WTC11 (cell line): ENCODE measurements at regions of chr15 and their contacts with region 1.

Region 1: GRCh38 chr15:45729141-45729540 is 94.3 kb downstream of the SQOR start:
- DNase-seq: no peak
- ATAC-seq: no peak
- H3K4me3 Mint-ChIP-seq: no peak overlapping the region
- H3K27ac Mint-ChIP-seq: no peak overlapping the region
- H3K4me1 Mint-ChIP-seq: peaks cover 15% of the 10 kb centered on the region
- H3K27me3 Mint-ChIP-seq: no peaks in the 10 kb centered on the region
- CTCF ChIP-seq: no peak

Region 2: DNA sequence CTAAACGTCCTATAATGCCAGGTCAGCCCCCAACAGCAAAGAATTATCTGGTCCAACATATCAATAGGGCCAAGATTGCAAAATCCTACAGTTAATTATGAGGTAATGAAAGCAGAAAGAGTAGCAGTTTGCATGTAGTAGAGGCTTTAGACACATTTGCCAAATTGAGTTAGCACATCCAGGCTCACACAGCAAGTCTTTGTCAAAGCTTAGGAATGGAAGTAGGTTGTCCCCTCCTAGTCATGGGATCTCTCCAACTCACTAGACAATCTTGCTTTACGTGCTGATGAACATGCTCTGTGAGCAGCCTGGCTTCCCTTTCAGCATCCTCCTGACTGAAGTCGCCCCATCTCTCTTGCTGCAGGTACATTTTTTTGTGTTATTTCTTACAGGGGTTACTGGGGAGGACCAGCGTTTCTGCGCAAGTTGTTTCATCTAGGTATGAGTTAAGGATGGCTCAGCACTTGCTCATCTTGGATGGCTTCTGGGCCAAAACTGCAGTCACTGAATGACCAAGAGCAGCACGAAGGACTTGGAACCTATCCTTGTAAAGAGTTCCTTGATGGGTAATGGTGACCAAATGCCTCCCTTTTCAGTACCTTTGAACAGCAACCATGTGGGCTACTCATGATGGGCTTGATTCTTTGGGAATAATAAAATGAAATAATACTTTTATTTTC is 38.4 kb before region 1 on chr15:
- CTCF ChIA-PET with region 1: no interaction called
- POLR2A ChIA-PET with region 1: no interaction called
- DNase-seq: no peak
- ATAC-seq: no peak
- H3K4me3 Mint-ChIP-seq: no peak overlapping the region
- H3K27ac Mint-ChIP-seq: no peak overlapping the region
- H3K4me1 Mint-ChIP-seq: no peaks in the 10 kb centered on the region
- H3K27me3 Mint-ChIP-seq: peaks cover 3% of the 10 kb centered on the region
- CTCF ChIP-seq: no peak

Region 3: DNA sequence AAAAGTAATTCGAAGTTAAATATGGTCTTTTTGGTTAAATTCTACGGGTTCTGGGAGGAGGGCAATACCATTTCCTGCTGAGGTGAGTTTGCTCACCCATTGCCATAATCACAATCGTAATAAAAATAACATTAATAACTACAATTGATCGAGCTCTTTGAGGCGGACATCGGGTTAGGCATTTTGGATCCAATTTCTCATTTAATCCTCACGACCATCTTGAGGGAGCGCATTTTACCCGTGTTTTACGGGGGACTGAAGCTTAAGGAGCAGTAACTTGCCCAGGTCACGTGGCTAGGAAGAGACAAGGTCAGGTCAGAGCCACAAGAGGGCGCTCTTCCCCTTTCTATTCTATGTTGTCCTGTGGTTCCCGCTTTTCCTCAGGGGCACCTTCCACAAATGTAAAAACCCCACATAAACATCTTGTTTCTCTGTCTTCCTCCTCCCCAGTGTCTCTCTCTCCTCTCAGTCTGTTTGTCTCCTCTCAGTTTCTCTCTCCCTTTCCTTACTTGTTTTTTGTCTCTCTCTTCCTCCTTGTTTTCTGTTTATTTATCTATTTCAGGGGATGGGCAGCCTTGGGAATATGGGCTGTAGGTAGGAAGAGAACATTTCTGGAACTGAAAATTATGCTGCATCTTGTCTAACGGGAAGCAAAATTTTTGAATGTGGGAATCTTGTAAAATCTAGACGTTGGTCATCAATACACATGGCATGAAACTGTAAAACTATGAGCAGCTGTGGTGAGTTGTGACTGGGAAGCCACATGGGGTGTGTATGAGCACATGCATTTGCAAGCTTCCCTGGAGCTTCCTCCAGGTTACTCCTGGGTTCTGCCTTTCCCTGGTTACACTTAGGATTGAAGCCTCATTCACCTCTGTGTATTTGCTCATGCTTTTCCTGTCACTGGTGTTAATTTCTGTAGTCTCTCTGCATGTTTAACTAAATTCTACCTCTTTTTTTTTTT is 23.3 kb before region 1 on chr15:
- CTCF ChIA-PET with region 1: interaction called, 13 read pairs
- POLR2A ChIA-PET with region 1: no interaction called
- DNase-seq: peak; percentile 78
- ATAC-seq: peak; percentile 38
- H3K4me3 Mint-ChIP-seq: peak overlapping the region; percentile 84
- H3K27ac Mint-ChIP-seq: peak overlapping the region; percentile 41
- H3K4me1 Mint-ChIP-seq: peaks cover 14% of the 10 kb centered on the region
- H3K27me3 Mint-ChIP-seq: peaks cover 19% of the 10 kb centered on the region
- CTCF ChIP-seq: peak; percentile 95

Region 4: DNA sequence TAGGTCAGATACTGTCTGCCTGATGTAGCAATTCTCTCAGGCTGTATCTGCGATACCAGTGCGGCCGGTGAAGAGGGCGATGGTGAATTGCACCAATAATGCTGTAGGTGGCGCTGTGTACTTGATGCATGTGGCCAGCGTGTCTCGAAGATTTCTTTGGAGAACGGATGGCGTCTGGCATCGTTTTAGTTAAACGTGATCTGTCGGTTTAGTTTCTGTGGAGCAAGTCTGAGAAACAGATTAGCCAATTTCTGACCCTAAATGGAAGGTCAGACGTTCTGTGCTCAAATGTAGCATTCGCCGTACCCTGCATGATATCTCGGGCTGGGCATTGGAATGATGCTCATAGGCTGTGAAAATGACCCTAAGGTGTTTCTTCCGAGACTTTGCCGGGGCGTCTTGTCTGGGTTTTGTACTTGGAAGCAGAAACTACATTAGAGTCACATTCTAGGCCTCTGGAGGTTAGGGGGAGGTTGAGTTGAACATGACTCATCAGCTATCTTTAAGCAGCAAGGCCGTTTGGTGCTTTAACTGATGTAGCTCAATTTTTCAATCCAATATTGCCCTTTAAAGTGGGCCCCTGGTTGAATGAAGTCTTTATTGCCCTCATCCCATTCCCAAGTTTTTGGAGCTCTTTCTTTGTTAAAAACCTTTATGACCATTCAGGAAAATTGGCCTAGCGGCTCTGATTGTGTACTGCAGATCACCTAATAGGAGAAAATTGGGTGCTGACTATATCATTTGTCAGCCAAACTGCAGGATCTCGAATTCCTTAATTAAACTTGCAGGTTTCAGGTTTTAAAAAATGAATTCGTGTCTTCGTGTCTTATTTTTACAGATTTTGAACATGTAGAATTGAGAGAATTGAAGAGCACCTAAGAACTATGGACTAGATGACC is 14.3 kb before region 1 on chr15:
- CTCF ChIA-PET with region 1: interaction called, 12 read pairs
- POLR2A ChIA-PET with region 1: no interaction called
- DNase-seq: peak; percentile 81
- ATAC-seq: peak; percentile 89
- H3K4me3 Mint-ChIP-seq: no peak overlapping the region
- H3K27ac Mint-ChIP-seq: no peak overlapping the region
- H3K4me1 Mint-ChIP-seq: peaks cover 8% of the 10 kb centered on the region
- H3K27me3 Mint-ChIP-seq: no peaks in the 10 kb centered on the region
- CTCF ChIP-seq: peak; percentile 92